ENCODE measurements at regions of chr3 and their contacts with region 1.

Region 1: DNA sequence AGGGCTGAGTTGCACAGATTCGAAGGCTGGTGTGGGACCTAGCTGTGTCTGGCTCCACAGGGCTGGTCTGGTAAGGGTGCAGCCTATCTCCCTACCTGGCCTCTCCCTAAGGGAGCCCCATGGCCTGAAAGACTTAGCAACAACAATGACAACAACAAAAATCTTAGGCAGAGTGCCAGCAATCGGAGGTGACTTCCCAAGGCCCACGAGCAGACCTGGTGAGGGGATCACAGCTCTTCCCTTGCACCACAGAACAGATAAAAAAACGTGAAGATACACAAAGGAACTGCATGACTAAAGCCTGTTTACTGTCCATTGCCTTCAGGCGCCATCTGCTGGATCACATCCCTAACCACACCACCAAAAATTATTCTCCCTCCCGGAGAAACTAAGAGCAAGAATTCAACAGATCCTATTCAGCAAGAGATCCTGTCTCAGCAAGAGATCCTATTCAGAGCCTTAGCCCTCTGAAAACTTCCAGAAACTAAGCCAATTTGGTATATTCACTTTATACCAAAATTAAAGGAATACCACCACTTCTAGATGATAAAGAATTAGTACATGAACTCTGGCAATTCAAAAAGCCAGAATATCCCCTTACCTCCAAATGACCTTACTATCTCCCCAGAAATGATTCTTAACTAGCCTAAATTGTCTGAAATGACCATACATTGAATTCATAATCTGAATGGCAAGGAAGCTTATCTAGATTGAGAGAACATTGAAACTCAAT is 24.1 kb upstream of the OR5K4 start:
- DNase-seq: peak; percentile 23 to 68 (median 51)
- H3K4me3 ChIP-seq: no peak overlapping the region
- H3K27ac ChIP-seq: no peak overlapping the region
- H3K4me1 ChIP-seq: no peaks in the 10 kb centered on the region
- H3K27me3 ChIP-seq: peaks cover 12% of the 10 kb centered on the region
- CTCF ChIP-seq: peak; percentile 33 to 73 (median 65)
- POLR2A ChIP-seq: no peak

Region 2: GRCh38 chr3:98039322-98040024 is 290.1 kb before region 1 on chr3:
- intact Hi-C with region 1: loop called (anchors 5 kb)
- DNase-seq: peak; percentile 45 to 76 (median 54)
- H3K4me3 ChIP-seq: peak overlapping the region in 1 of 4 donors; percentile 45
- H3K27ac ChIP-seq: no peak overlapping the region
- H3K4me1 ChIP-seq: no peaks in the 10 kb centered on the region
- H3K27me3 ChIP-seq: peaks cover 11% of the 10 kb centered on the region
- CTCF ChIP-seq: peak; percentile 75 to 97 (median 84)
- POLR2A ChIP-seq: no peak

Region 3: GRCh38 chr3:98406034-98406433 is 76.5 kb after region 1 on chr3:
- intact Hi-C with region 1: no loop called
- DNase-seq: no peak
- H3K4me3 ChIP-seq: no peak overlapping the region
- H3K27ac ChIP-seq: no peak overlapping the region
- H3K4me1 ChIP-seq: no peaks in the 10 kb centered on the region
- H3K27me3 ChIP-seq: no peaks in the 10 kb centered on the region
- CTCF ChIP-seq: no peak
- POLR2A ChIP-seq: no peak